ENCODE measurements at regions of chr5 and their contacts with region 1.

Region 1: GRCh38 chr5:173293817-173294672 is 34.2 kb downstream of the STC2 start:
- DNase-seq: peak; percentile 75 to 94 (median 85)
- H3K4me3 ChIP-seq: peak overlapping the region in 1 of 3 donors; percentile 62
- H3K27ac ChIP-seq: no peak overlapping the region
- H3K4me1 ChIP-seq: peaks cover 0 to 10% (median 6%) of the 10 kb centered on the region in 3 donors
- H3K27me3 ChIP-seq: no peaks in the 10 kb centered on the region
- CTCF ChIP-seq: peak; percentile 94

Region 2: GRCh38 chr5:173328137-173328843 is 34.2 kb after region 1 on chr5 and contains the start of gene STC2:
- intact Hi-C with region 1: loop called (anchors 5 kb)
- DNase-seq: peak; percentile 83 to 92 (median 91)
- H3K4me3 ChIP-seq: peak within 1 kb of the TSS; percentile 14 to 58 (median 56)
- H3K27ac ChIP-seq: no peak within 1 kb of the TSS
- H3K4me1 ChIP-seq: peaks cover 2 to 28% (median 16%) of the 10 kb centered on the region in 3 donors
- H3K27me3 ChIP-seq: peaks cover 20% of the 10 kb centered on the region
- CTCF ChIP-seq: no peak
- total RNA-seq, gene STC2: 2.7 TPM

Measured in kidney (tissue), 22 donors.